Left cardiac atrium (tissue), 4 donors: ENCODE measurements at regions of chr5 and their contacts with region 1.

Region 1: DNA sequence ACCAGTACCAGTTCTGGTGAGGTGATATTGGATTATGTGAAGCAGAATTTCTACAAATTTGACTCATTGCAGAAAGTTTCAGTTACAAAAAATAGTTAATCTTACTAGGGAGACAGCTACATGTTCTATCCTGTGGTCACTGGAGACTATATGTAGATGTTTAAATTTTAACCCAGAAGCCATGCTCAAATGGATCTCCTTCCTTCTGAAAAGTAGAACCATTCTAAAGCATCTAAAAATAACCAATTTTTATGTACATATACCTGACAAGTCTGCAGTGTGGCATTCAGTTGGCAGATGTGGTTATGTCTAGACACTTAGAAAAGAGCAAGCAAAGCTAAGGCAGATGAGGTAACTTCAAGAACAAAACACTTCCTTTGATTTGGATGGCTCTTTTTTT is 65.5 kb upstream of the POU4F3 start:
- DNase-seq: no peak
- ATAC-seq: no peak

Region 2: DNA sequence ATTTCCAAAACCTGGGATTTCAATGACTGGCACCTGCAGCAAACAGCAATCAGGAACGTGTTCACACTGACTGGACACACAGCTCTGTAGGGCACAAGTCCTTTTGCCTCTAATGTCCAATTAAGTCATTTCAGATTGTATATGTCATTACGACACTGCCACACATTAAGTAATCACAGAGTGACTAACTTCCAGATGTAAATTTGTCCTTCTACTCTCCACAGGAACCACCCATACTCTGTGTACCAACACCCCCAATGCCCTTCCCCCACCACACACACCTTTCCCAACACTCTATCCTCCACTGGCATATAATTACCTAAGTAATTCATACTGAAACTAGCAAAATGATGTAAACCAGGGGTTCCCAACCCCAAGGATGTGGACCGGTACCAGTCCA is 121.1 kb before region 1 on chr5:
- intact Hi-C with region 1: loop called in 1 of 2 experiments (anchors 10 kb)
- DNase-seq: no peak
- ATAC-seq: no peak

Region 3: GRCh38 chr5:146165460-146165859 is 107.6 kb before region 1 on chr5:
- intact Hi-C with region 1: loop called in 1 of 2 experiments (anchors 10 kb)
- DNase-seq: no peak
- ATAC-seq: no peak